ENCODE measurements at regions of chr3 and their contacts with region 1.

Region 1: DNA sequence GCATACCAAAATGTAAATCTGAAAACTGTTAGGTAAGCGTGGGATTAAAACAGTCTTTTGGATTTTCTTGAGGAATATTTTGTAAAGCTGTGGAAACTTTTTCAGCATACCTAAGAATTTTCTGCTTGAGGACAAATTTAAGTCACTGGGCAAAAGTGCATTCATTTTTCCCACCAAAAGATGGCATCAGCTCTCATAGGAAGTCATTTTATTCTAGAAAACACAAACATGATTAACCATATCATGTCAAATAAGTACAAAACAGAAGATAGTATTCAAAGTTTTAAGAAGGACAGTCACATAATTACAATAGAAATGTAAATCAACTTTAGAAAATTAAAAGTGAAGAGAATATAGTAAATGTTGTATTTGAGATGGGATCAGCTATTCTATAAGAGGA is 63.5 kb downstream of the SLC49A4 start:
- DNase-seq: no peak
- ATAC-seq: no peak

Region 2: DNA sequence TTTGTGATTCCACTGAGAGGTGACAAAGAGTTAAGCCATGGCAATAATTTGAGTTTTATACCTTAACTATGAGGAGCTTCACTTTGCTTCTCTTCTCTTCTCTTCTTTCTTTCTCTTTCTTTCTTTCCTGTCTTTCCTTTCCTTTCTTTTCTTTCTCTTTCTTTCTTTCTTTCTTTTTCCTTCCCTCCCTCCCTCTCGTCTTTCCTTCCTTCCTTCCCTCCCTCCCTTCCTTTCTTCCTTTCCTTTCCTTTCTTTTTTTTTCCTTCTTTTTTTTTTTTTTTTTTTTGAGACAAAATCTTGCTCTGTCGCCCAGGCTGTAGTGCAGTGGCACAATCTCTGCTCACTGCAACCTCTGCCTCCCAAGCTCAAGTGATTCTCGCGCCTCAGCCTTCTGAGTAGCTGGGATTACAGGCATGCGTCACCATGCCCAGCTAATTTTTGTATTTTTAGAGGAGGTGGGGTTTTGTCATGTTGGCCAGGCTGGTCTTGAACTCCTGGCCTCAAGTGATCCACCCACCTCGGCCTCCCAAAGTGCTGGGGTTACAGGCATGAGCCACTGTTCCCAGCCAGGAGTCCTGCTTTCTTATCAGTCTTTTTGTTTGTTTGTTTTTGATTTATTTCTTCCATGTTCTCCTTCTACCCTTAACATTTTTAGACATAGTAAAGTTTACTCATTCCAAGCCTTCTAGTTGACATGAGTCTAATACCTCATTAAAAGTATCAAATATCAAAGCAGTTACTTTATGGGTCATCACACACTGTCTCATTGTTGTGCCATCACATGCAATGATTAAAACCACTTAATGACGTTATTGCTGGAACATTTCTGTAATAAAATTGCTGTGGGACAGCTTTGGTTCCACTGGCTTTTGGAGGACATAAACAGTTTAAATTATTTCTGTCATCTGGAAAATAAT is 33.6 kb before region 1 on chr3:
- intact Hi-C with region 1: no loop called
- DNase-seq: no peak
- ATAC-seq: no peak

Region 3: GRCh38 chr3:123766193-123767019 is 908.0 kb after region 1 on chr3:
- intact Hi-C with region 1: loop called (anchors 5 kb)
- DNase-seq: no peak
- ATAC-seq: peak; percentile 36

Region 4: GRCh38 chr3:124034016-124034843 is 1175.9 kb after region 1 on chr3:
- intact Hi-C with region 1: no loop called
- DNase-seq: no peak
- ATAC-seq: peak; percentile 15

Measured in sciatic nerve (tissue), 2 donors.